ENCODE measurements at regions of chr9 and their contacts with region 1.

Region 1: DNA sequence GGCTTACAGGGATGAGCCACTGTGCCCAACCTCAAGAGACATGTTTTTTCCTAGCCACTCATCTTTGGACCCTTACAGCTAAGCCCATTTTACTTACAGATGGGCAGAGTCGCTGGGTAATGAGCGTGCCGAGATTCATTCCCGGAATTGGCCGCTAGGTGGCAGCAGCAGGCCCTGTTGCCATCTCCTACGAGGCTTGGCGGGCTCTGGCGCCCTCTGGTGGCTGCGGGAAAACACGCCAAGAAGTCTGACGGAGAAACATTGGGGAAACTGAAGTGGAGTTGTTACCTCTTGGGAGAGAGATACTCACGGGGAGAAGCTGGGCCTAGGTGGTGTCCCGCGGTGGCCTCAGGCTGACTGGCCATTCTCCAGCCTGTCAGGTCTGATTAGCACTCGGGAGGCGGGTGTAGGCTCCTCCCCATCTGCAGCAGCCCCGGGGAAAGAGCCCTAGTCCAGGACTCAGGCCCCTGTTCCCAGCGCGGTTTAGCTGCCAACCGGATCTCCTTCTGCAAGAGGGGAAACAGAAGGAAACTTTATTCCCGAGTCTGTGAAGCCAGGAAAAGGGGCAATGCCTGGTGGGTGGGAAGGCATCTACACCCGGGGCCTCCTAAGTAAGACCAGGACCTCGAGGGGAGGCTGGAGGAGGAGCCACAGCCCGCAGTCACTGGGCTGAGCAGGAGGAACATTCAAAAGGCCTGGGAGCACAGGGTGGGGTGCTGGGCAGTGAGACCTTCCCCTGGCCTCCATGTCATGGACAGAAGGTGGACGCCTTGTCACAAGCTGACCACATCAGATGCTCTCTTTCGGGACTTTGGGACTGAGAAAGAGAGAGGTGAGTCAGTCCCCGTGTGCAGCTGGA is 9.7 kb downstream of the PTGES2 start:
- DNase-seq: peak; percentile 95 to 97
- ATAC-seq: peak; percentile 68 to 83 (median 78)
- H3K4me3 ChIP-seq: no peak overlapping the region
- H3K27ac ChIP-seq: no peak overlapping the region
- H3K4me1 ChIP-seq: no peaks in the 10 kb centered on the region
- H3K27me3 ChIP-seq: no peaks in the 10 kb centered on the region
- CTCF ChIP-seq: peak; percentile 100

Region 2: DNA sequence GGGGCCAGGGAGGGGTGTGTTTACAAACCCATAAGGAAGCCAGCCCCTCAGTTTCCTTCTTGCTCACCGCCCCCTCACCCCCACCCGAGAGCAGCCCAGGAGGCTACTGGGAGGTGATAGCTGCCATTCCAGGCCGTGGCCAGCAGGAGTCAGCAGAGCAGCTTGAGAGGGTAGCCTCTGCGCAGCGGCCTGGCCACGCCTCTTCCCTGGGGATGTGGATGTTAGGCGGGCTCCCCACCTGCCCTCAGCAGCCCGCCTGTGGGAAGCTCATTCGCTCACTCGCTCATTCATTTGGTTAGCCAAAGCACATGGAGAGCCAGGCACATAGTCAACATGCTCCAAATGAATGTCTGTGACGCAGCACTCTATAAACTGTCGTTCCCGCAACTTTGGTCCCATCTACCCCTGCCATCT is 174.1 kb before region 1 on chr9:
- intact Hi-C with region 1: loop called (anchors 5 to 10 kb)
- DNase-seq: peak; percentile 85 to 91
- ATAC-seq: peak; percentile 75 to 85 (median 78)
- H3K4me3 ChIP-seq: no peak overlapping the region
- H3K27ac ChIP-seq: no peak overlapping the region
- H3K4me1 ChIP-seq: peaks cover 2% of the 10 kb centered on the region
- H3K27me3 ChIP-seq: no peaks in the 10 kb centered on the region
- CTCF ChIP-seq: peak; percentile 75

Region 3: DNA sequence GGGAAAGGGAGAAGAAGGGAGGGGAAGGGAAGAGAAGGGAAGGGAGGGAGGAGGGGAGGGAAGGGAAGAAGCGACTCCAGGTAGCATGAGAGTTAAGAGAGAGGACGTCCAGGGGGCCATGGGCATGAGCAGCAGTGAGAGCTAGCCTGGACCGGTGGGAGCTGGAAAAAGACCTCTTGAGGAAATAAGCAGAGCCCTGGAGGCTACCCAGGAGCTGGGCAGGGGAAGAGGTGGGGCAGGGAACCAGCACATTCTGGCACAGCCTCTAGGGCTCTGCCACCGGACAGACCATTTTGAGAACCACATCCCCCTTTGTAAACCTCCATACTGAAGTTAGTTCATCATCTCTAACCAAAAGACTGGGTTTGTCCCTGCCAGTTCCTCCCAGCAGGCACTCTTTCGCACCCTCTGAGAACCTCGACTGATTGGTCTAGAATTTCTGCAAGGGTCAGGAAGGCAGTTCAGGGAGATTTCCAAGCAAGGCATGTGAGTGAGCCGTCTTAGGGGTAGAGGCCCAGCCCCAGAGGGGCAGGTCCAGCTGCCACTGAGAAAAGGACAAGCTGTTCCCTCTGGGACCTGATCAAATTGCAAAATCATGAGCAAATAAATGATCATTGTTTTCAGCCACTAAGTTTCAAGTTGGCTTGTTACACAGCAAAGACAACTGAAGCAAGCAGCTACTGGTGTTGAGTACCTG is 62.4 kb before region 1 on chr9:
- intact Hi-C with region 1: loop called in 1 of 2 experiments (anchors 5 kb)
- DNase-seq: peak; percentile 40 to 75
- ATAC-seq: peak; percentile 33 to 70 (median 56)
- H3K4me3 ChIP-seq: no peak overlapping the region
- H3K27ac ChIP-seq: peak overlapping the region; percentile 71
- H3K4me1 ChIP-seq: peaks cover 28% of the 10 kb centered on the region
- H3K27me3 ChIP-seq: no peaks in the 10 kb centered on the region
- CTCF ChIP-seq: no peak

Measured in psoas muscle (tissue), 8 donors.